ENCODE measurements at regions of chr3 and their contacts with region 1.

Region 1: GRCh38 chr3:117510396-117510795 is 800.8 kb downstream of the TUSC7 start:
- DNase-seq: no peak
- CTCF ChIP-seq: no peak

Region 2: DNA sequence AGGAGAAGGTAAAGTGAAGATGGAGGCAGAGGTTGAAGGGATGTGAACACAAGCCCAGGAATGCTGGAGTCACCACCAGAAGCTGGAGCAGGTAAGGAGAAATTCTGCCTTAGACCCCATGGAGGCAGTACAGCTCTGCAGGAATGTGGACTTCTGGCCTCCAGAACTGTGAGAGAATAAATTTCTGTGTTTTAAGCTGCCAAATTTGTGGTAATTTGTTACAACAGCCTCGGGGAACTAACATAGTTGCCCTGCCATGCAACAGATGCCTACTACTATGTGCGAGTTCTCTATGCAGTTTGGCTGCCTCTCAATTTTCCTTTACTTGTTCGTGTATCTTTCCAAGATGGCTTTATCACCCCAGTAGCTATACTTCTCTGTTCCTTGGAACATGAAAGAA is 406.7 kb before region 1 on chr3:
- CTCF ChIA-PET with region 1: no interaction called
- POLR2A ChIA-PET with region 1: no interaction called
- DNase-seq: no peak
- CTCF ChIP-seq: no peak

Region 3: GRCh38 chr3:117499189-117499870 is 11.1 kb before region 1 on chr3:
- CTCF ChIA-PET with region 1: interaction called, 14 read pairs
- POLR2A ChIA-PET with region 1: no interaction called
- DNase-seq: no peak
- CTCF ChIP-seq: no peak

Measured in GM10248 (cell line).